GM10248 (cell line): ENCODE measurements at regions of chr1 and their contacts with region 1.

Region 1: DNA sequence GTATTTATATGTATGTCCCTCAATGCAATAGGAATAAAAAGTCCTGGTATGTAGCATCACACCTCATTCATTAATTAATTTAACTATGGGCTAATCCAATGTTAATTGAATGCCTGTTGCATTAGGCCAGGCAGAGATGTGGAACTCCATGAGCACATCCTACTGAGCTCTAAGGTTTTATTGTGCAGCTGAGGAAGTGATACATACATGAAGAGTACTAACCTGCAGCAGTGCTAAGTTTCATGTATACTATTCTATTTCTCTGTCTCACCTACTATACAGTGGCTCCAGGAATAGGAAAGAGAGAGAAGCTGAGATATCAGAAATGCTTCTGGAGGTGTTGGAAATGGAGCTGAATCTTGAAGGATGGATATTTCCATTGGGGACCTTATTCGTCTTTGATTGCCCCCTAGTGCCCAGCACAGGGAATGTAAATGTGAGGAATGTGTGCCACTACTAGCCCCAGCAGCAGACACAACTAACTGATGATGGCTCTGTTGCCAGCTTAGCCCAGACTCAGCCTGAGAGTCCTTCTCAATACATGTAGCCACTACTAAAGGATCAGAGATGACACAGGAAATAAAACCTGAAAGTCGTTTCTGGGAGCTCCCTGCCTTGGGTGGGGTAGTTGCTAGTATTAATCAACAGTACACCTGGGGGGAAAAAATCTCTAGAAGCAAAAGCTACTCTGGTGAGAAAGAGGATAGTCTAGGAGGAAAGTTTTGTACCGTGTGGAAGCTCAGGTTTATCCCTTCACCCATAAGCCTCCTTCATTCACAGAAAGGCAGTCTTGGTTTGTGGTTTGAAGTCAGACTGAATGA is 173.3 kb upstream of the FOXD3 start:
- DNase-seq: peak; percentile 16
- CTCF ChIP-seq: peak; percentile 68

Region 2: GRCh38 chr1:62783723-62784508 is 365.1 kb before region 1 on chr1 and contains the start of gene ATG4C:
- CTCF ChIA-PET with region 1: no interaction called
- POLR2A ChIA-PET with region 1: no interaction called
- DNase-seq: peak; percentile 92
- CTCF ChIP-seq: no peak

Region 3: DNA sequence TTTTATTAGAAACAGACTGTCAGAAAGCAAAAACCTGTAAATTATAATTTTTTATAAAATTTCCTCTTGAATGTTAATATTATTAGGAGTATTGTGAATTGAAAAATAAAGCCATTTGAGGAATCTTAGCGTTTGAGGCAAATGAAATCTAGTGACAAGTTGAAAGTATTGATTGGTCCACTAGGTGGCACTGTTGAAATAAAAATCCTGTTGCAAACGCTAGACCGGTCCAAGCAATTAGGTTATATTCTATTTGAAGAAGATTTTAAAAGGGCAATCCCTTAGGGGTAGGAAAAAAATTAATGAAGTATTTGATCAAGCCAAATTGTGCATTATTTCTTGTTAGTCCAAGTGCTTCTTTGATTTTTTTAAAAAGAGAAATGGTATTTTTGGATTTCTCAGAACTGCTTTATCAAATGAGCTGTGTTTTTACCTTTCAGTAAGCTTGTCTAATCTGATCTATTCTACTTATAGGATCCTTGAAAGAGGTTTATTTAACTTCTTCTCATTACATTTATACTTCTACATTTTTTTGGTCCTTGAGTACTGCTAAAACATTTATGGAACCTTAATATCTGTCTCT is 307.4 kb before region 1 on chr1:
- CTCF ChIA-PET with region 1: interaction called, 11 read pairs
- POLR2A ChIA-PET with region 1: no interaction called
- DNase-seq: peak; percentile 52
- CTCF ChIP-seq: peak; percentile 69

Region 4: GRCh38 chr1:62962901-62963776 is 185.9 kb before region 1 on chr1:
- CTCF ChIA-PET with region 1: interaction called, 15 read pairs
- POLR2A ChIA-PET with region 1: no interaction called
- DNase-seq: peak; percentile 71
- CTCF ChIP-seq: peak; percentile 51

Region 5: GRCh38 chr1:63004868-63005267 is 144.2 kb before region 1 on chr1:
- CTCF ChIA-PET with region 1: interaction called, 11 read pairs
- POLR2A ChIA-PET with region 1: no interaction called
- DNase-seq: peak; percentile 24
- CTCF ChIP-seq: no peak

Region 6: DNA sequence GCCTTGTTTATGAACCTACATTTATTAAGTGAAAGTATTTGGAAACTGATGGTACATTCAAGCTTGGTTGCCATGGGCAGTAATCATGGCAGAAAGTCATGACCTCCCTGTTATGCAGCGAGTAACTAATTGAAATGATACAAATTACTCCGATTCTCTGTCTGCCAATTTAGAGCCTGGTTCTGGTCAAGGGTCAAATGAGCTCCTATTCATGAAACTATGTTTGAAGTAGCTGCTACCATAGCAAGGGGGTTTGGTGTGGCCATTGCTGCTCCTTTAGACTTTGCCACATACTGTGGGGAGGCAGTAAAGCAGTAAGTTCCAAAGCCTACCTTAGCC is 13.9 kb before region 1 on chr1:
- CTCF ChIA-PET with region 1: interaction called, 20 read pairs
- POLR2A ChIA-PET with region 1: no interaction called
- DNase-seq: no peak
- CTCF ChIP-seq: no peak